Spleen (tissue), 13 donors: ENCODE measurements at regions of chr11 and their contacts with region 1.

Region 1: DNA sequence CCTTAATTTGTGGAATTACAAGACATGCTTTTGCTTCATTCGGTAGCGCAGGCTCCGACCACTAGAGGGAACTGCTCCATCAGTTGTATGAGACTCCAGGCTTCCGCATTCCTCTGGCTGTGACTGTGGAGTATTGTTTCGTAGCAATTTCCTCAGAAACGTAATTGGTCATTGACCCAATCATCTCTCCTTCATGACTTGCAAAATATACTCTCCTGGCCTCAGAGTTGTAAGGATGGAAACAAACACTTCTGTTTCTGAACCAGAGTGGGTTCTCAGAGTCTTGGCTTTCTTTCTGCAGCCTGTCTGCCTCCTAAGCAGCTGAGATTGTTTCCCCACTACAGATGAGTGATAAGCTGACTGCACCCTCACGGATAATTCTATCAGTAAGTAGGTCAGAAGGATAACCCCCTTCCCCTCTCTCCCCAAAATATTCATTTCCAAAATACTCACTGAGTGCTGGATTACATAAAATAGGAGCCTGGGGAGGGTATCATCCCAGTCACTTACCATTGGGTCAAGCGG is 146.8 kb upstream of the ZC3H12C start:
- DNase-seq: peak; percentile 83
- H3K4me3 ChIP-seq: peak overlapping the region in 5 of 8 donors; percentile 6 to 52 (median 21)
- H3K27ac ChIP-seq: peak overlapping the region in 4 of 8 donors; percentile 40 to 65 (median 53)
- H3K4me1 ChIP-seq: peaks cover 0 to 13% (median 8%) of the 10 kb centered on the region in 6 donors
- H3K27me3 ChIP-seq: no peaks in the 10 kb centered on the region
- CTCF ChIP-seq: peak; percentile 71 to 90 (median 80)
- POLR2A ChIP-seq: no peak

Region 2: GRCh38 chr11:109838026-109838425 is 108.4 kb before region 1 on chr11:
- intact Hi-C with region 1: no loop called
- DNase-seq: no peak
- H3K4me3 ChIP-seq: no peak overlapping the region
- H3K27ac ChIP-seq: no peak overlapping the region
- H3K4me1 ChIP-seq: no peaks in the 10 kb centered on the region
- H3K27me3 ChIP-seq: no peaks in the 10 kb centered on the region
- CTCF ChIP-seq: no peak
- POLR2A ChIP-seq: no peak

Region 3: GRCh38 chr11:110000031-110000502 is 53.7 kb after region 1 on chr11:
- intact Hi-C with region 1: no loop called
- DNase-seq: no peak
- H3K4me3 ChIP-seq: no peak overlapping the region
- H3K27ac ChIP-seq: no peak overlapping the region
- H3K4me1 ChIP-seq: no peaks in the 10 kb centered on the region
- H3K27me3 ChIP-seq: peaks cover 0 to 8% (median 0%) of the 10 kb centered on the region in 7 donors
- CTCF ChIP-seq: no peak
- POLR2A ChIP-seq: no peak

Region 4: DNA sequence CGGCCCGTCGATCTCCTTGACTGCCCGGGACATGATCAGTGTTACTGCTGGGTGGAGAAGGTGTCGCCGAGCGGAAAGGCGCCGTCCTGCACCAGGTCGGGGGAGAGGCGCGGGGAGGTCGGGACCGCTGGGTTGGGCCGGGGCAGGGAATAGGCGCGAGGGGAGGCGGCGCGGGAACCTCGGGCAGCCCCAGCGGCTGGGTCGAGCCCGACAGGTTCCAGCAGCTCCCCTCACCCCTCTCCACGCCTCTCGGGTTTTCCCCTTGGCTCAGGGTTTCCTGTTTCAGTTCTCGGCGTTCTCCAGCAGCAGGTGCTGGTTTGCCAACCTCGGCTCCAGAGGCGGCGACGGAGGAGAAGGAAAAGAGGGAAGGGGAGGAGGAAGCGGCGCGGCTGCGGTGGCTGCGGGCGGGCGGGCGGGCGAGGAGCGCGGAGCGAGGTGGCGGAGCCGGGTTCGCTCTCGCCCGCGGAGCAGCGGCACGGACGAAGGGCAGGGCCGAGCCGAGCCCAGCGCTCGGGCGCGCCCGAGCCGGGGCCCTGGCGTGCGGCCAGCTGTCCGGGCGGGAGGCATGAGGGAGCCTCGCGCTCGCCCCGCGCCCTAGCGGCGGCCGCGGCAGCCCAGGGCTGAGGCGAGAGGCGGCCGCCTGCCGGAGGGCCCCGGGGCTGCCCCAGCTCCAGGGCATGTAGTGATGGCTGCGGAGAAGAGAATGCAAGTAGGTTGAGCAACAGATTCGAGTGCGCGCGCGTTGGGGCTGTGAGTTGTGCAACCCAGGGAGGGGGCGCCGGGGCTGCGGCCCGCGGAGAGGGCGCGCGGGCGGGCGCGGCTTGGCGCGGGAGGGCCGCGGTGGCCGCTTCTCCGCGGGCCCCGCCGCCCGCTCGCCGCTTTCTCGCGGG is 146.4 kb after region 1 on chr11 and contains the start of gene ZC3H12C:
- intact Hi-C with region 1: loop called (anchors 10 kb)
- DNase-seq: peak; percentile 87
- H3K4me3 ChIP-seq: peak within 1 kb of the TSS; percentile 44 to 71 (median 56)
- H3K27ac ChIP-seq: peak within 1 kb of the TSS; percentile 58 to 90 (median 86)
- H3K4me1 ChIP-seq: peaks cover 0 to 30% (median 21%) of the 10 kb centered on the region in 6 donors
- H3K27me3 ChIP-seq: peaks cover 0 to 73% (median 16%) of the 10 kb centered on the region in 7 donors
- CTCF ChIP-seq: peak in 7 of 11 experiments; percentile 20 to 58 (median 45)
- POLR2A ChIP-seq: no peak
- total RNA-seq, gene ZC3H12C: 3.9 to 10.4 (median 6.4) TPM

Region 5: GRCh38 chr11:110376711-110377324 is 430.4 kb after region 1 on chr11:
- intact Hi-C with region 1: loop called (anchors 10 kb)
- DNase-seq: no peak
- H3K4me3 ChIP-seq: peak overlapping the region in 1 of 8 donors; percentile 27
- H3K27ac ChIP-seq: peak overlapping the region in 6 of 8 donors; percentile 15 to 75 (median 46)
- H3K4me1 ChIP-seq: peaks cover 0 to 27% (median 7%) of the 10 kb centered on the region in 6 donors
- H3K27me3 ChIP-seq: no peaks in the 10 kb centered on the region
- CTCF ChIP-seq: peak; percentile 51 to 85 (median 79)
- POLR2A ChIP-seq: no peak